PC-9 (cell line): ENCODE measurements at regions of chrX and their contacts with region 1.

Region 1: GRCh38 chrX:104565791-104566680 is at the start of gene IL1RAPL2:
- DNase-seq: peak; percentile 65 to 74
- H3K4me3 ChIP-seq: peak within 1 kb of the TSS; percentile 77
- H3K27ac ChIP-seq: no peak within 1 kb of the TSS
- H3K4me1 ChIP-seq: no peaks in the 10 kb centered on the region
- H3K27me3 ChIP-seq: no peaks in the 10 kb centered on the region
- CTCF ChIP-seq: peak; percentile 79
- total RNA-seq, gene IL1RAPL2: 0.43 and 1.6 TPM in 2 replicates

Region 2: GRCh38 chrX:104318330-104319009 is 247.6 kb before region 1 on chrX:
- CTCF ChIA-PET with region 1: interaction called, 6 read pairs
- POLR2A ChIA-PET with region 1: no interaction called
- intact Hi-C with region 1: loop called (anchors 5 kb)
- DNase-seq: peak; percentile 53 to 98
- H3K4me3 ChIP-seq: peak overlapping the region; percentile 45
- H3K27ac ChIP-seq: peak overlapping the region; percentile 99
- H3K4me1 ChIP-seq: peaks cover 81% of the 10 kb centered on the region
- H3K27me3 ChIP-seq: no peaks in the 10 kb centered on the region
- CTCF ChIP-seq: no peak; the same call in 1 of the 2 replicates

Region 3: GRCh38 chrX:104660092-104660491 is 94.1 kb after region 1 on chrX:
- CTCF ChIA-PET with region 1: no interaction called
- POLR2A ChIA-PET with region 1: no interaction called
- intact Hi-C with region 1: loop called (anchors 5 kb)
- DNase-seq: peak in 1 of 2 experiments; percentile 65
- H3K4me3 ChIP-seq: peak overlapping the region; percentile 35; the same call in 1 of the 2 replicates
- H3K27ac ChIP-seq: no peak overlapping the region
- H3K4me1 ChIP-seq: peaks cover 28% of the 10 kb centered on the region
- H3K27me3 ChIP-seq: no peaks in the 10 kb centered on the region
- CTCF ChIP-seq: no peak

Region 4: DNA sequence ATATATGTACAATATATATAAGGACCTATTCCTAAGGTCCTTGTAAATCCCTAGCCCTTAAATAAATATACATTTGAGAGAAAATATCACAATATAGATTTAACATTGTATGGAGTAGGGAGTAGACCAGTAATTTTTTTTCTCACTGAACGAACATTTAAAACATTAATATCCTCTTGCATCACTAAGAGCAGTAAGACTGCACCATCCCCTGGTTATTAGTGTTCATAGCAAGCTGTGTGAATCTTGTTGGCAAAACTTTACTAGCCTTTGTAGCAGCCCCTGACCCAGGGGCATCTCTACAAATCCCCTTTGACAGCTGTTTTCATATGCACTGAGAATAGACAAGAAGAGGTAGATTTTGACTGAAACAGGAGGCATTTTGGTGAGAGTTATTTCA is 146.5 kb after region 1 on chrX:
- CTCF ChIA-PET with region 1: no interaction called
- POLR2A ChIA-PET with region 1: no interaction called
- intact Hi-C with region 1: loop called (anchors 1 kb)
- DNase-seq: no peak
- H3K4me3 ChIP-seq: no peak overlapping the region
- H3K27ac ChIP-seq: no peak overlapping the region
- H3K4me1 ChIP-seq: peaks cover 7% of the 10 kb centered on the region
- H3K27me3 ChIP-seq: no peaks in the 10 kb centered on the region
- CTCF ChIP-seq: peak; percentile 33; the same call in 1 of the 2 replicates

Region 5: GRCh38 chrX:104922206-104922621 is 356.2 kb after region 1 on chrX:
- CTCF ChIA-PET with region 1: interaction called, 3 read pairs
- POLR2A ChIA-PET with region 1: no interaction called
- intact Hi-C with region 1: loop called (anchors 1 kb)
- DNase-seq: peak; percentile 59 to 61
- H3K4me3 ChIP-seq: no peak overlapping the region
- H3K27ac ChIP-seq: no peak overlapping the region
- H3K4me1 ChIP-seq: no peaks in the 10 kb centered on the region
- H3K27me3 ChIP-seq: no peaks in the 10 kb centered on the region
- CTCF ChIP-seq: peak; percentile 96

Region 6: GRCh38 chrX:105190252-105190853 is 624.3 kb after region 1 on chrX:
- CTCF ChIA-PET with region 1: no interaction called
- POLR2A ChIA-PET with region 1: no interaction called
- intact Hi-C with region 1: loop called (anchors 5 kb)
- DNase-seq: peak in 1 of 2 experiments; percentile 39
- H3K4me3 ChIP-seq: no peak overlapping the region
- H3K27ac ChIP-seq: no peak overlapping the region
- H3K4me1 ChIP-seq: no peaks in the 10 kb centered on the region
- H3K27me3 ChIP-seq: no peaks in the 10 kb centered on the region
- CTCF ChIP-seq: peak; percentile 80